Motor neuron (in vitro differentiated cells): ENCODE measurements at regions of chr2 and their contacts with region 1.

Region 1: DNA sequence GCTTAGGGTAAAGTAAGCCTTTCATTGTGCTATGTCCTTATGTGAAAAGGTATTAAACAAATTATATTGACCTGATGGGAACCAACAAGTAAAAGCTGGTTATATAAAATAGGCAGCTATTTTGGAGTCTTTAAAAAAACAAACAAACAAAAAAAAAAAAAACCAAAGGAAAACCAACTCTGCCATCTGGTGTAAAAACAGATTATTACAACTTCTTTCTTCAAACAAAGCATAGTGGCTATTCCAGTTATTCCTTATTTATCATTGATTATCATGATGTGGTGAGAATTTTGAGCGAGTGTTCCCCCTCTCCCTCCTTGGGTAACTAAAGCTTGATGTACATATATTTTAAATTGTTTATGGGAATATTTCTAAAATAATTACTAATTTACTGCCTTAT is 122.4 kb upstream of the FHL2 start:
- ATAC-seq: no peak
- H3K4me3 ChIP-seq: no peak overlapping the region
- H3K27ac ChIP-seq: no peak overlapping the region
- H3K4me1 ChIP-seq: no peaks in the 10 kb centered on the region

Region 2: GRCh38 chr2:105369747-105370690 is 151.2 kb before region 1 on chr2:
- in situ Hi-C with region 1: loop called in 7 of 9 experiments (anchors 5 to 25 kb)
- ATAC-seq: peak; percentile 76 to 99 (median 97)
- H3K4me3 ChIP-seq: no peak overlapping the region
- H3K27ac ChIP-seq: no peak overlapping the region
- H3K4me1 ChIP-seq: peaks cover 0 to 7% of the 10 kb centered on the region in 2 donors

Region 3: GRCh38 chr2:105377819-105378218 is 143.4 kb before region 1 on chr2:
- in situ Hi-C with region 1: loop called in 6 of 9 experiments (anchors 5 to 25 kb)
- ATAC-seq: peak in 2 of 8 experiments; percentile 5 to 15
- H3K4me3 ChIP-seq: no peak overlapping the region
- H3K27ac ChIP-seq: no peak overlapping the region
- H3K4me1 ChIP-seq: no peaks in the 10 kb centered on the region

Region 4: GRCh38 chr2:105398699-105399432 is 122.3 kb before region 1 on chr2 and contains the start of gene FHL2:
- in situ Hi-C with region 1: loop called in 1 of 9 experiments (anchors 25 kb)
- ATAC-seq: peak; percentile 67 to 98 (median 96)
- H3K4me3 ChIP-seq: peak within 1 kb of the TSS; percentile 68 to 83 (median 74)
- H3K27ac ChIP-seq: no peak within 1 kb of the TSS
- H3K4me1 ChIP-seq: no peaks in the 10 kb centered on the region
- total RNA-seq, gene FHL2: 2.4 to 87.6 (median 23.4) TPM